AG04450 (cell line): ENCODE measurements at regions of chr17 and their contacts with region 1.

Region 1: DNA sequence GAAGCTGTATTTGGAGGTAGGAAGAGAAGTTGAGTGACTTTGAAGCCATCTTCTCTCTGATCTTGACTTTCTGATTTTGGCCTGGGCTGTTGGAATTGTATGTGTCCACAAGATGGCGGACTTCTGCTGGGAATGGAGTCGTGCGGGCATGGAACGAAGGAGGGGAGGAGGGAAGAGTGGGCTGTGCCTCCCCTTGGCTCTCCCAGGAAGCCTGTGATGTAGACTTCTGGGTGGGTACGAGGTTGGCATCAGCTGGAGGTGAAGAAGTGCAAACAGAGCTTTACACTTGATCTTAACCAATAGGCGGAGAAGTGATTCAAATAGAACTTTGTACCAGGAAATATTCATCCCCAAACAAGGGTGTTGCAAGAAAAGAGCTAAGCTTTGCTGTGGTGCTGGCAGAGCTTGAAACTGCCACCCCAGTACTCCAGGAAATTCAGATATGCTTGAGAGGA is 7.4 kb upstream of the TMEM220 start:
- DNase-seq: peak; percentile 24
- H3K4me3 ChIP-seq: no peak overlapping the region
- H3K27ac ChIP-seq: no peak overlapping the region
- H3K27me3 ChIP-seq: peaks cover 14% of the 10 kb centered on the region
- CTCF ChIP-seq: peak; percentile 82

Region 2: DNA sequence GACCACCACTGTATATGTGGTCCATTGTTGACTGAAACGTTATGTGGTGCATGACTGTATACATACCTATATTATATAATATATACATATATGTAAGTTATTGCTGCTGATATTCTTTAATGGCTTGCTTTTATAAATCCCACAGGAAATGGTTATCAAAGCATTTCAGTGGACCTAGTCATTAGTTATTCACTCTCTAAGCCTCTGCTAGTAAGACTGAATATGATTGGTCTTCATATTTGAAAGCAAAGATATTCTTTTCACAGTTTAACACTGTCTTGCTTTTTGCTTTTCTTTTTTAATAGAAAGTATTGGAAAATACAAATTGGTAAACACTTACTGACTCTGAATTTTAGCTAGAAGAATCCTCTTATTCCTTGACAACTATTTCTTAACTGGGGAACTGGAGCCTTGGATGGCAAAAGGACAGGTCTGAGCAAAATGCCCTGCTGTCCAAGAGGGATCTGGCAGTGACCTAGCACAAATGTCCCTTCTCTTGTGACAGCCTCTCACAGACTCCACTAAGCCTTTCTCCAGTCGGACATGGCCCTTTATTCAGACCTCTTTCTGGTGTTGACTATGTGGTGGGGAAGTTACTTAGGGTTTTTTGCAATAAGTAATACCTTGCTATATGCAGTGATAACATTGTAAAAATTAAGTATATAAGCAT is 173.1 kb before region 1 on chr17:
- CTCF ChIA-PET with region 1: no interaction called
- POLR2A ChIA-PET with region 1: no interaction called
- DNase-seq: no peak
- H3K4me3 ChIP-seq: no peak overlapping the region
- H3K27ac ChIP-seq: no peak overlapping the region
- H3K27me3 ChIP-seq: no peaks in the 10 kb centered on the region
- CTCF ChIP-seq: no peak

Region 3: DNA sequence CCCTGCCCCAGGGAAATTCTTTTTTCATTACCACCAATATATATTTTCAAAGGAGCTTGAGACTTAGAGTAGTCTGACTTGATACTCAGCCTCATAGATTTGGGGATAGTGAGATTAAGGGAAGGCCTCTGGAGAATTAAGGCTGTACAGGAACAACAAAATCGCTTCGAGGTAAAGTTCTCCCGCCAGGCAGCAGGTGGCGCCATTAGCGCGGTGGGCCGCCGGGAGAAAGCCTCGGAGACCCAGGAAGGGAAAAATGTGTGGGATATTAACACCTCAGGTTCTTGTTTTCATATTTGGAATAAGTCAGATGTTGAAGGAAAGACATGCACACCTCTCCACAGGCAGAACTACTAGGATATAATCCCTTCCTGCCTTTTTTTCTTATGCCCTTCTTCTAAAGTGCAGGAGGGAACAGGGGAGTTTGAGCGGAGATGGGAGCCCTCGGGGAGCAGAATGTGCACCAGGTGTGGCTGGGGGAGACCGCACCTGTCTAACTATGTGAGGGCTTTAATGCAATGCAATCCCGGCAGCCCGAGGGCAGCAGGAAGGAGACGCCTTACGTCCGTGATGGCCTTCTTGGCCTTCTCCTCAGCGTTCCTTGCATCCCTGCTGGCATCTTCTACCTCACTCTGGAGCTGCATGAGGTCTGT is 106.0 kb before region 1 on chr17:
- CTCF ChIA-PET with region 1: interaction called, 10 read pairs
- POLR2A ChIA-PET with region 1: no interaction called
- DNase-seq: no peak
- H3K4me3 ChIP-seq: no peak overlapping the region
- H3K27ac ChIP-seq: no peak overlapping the region
- H3K27me3 ChIP-seq: no peaks in the 10 kb centered on the region
- CTCF ChIP-seq: peak; percentile 88

Region 4: GRCh38 chr17:10646392-10646990 is 90.7 kb before region 1 on chr17:
- CTCF ChIA-PET with region 1: interaction called, 36 read pairs
- POLR2A ChIA-PET with region 1: no interaction called
- DNase-seq: peak; percentile 49
- H3K4me3 ChIP-seq: no peak overlapping the region
- H3K27ac ChIP-seq: no peak overlapping the region
- H3K27me3 ChIP-seq: no peaks in the 10 kb centered on the region
- CTCF ChIP-seq: peak; percentile 94

Region 5: GRCh38 chr17:10668771-10669170 is 68.4 kb before region 1 on chr17:
- CTCF ChIA-PET with region 1: interaction called, 10 read pairs
- POLR2A ChIA-PET with region 1: no interaction called
- DNase-seq: peak; percentile 58
- H3K4me3 ChIP-seq: no peak overlapping the region
- H3K27ac ChIP-seq: peak overlapping the region; percentile 47
- H3K27me3 ChIP-seq: no peaks in the 10 kb centered on the region
- CTCF ChIP-seq: no peak

Region 6: GRCh38 chr17:10697092-10698081 is 39.8 kb before region 1 on chr17 and contains the starts of genes ADPRM and SCO1:
- CTCF ChIA-PET with region 1: interaction called, 13 read pairs
- POLR2A ChIA-PET with region 1: no interaction called
- DNase-seq: peak; percentile 80
- H3K4me3 ChIP-seq: peak within 1 kb of the TSS; percentile 91
- H3K27ac ChIP-seq: peak within 1 kb of the TSS; percentile 91
- H3K27me3 ChIP-seq: no peaks in the 10 kb centered on the region
- CTCF ChIP-seq: peak; percentile 56
- polyA plus RNA-seq, gene ADPRM: 11.8 and 15.1 TPM in 2 replicates
- polyA plus RNA-seq, gene SCO1: 25.1 and 28.5 TPM in 2 replicates

Region 7: GRCh38 chr17:10713318-10713717 is 23.9 kb before region 1 on chr17:
- CTCF ChIA-PET with region 1: interaction called, 14 read pairs
- POLR2A ChIA-PET with region 1: no interaction called
- DNase-seq: no peak
- H3K4me3 ChIP-seq: no peak overlapping the region
- H3K27ac ChIP-seq: no peak overlapping the region
- H3K27me3 ChIP-seq: no peaks in the 10 kb centered on the region
- CTCF ChIP-seq: no peak

Region 8: GRCh38 chr17:10803830-10804475 is 66.8 kb after region 1 on chr17 and contains the start of gene TMEM238L:
- CTCF ChIA-PET with region 1: no interaction called
- POLR2A ChIA-PET with region 1: no interaction called
- DNase-seq: no peak
- H3K4me3 ChIP-seq: no peak within 1 kb of the TSS
- H3K27ac ChIP-seq: no peak within 1 kb of the TSS
- H3K27me3 ChIP-seq: no peaks in the 10 kb centered on the region
- CTCF ChIP-seq: no peak
- polyA plus RNA-seq, gene TMEM238L: not detected in 2 replicates

Region 9: DNA sequence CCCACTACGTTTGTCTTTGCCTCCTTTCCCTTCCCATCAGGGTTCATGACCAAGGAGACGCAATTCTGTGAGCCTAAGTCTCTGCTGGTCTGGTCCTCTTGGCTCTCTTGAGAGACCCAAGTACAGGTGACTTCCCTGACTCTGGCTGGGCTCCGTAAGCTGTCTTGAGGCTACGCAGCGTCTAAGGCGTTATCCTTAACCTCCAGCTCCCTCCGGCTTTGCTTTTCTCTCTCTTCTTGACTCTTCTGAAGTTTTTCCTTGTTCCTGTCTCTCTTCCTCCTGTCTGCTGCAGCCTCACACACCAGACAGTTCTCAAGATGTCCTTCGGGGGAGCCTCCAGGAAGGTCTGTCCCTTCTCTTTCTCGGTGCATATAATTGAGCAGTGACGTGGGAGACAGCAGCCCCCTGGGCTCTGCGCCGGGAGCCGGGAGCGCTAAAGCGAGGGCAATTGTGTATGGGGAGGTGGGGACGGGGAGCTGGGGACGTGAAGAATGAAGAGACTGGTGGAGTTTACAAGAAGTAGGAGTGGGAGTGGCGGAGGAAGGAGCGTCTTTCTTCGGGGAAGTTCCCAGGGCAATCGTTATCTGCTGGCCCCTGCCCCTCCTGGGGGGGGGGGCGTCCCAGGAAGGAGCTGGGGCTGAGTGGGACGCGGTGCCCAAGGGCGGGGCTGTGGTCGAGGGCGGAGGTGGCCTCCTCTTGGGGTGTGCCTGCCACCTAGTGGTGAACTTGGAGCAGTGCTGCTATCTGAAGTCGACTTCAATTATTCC is 107.6 kb after region 1 on chr17:
- CTCF ChIA-PET with region 1: interaction called, 75 read pairs
- POLR2A ChIA-PET with region 1: no interaction called
- DNase-seq: peak; percentile 24
- H3K4me3 ChIP-seq: peak overlapping the region; percentile 54
- H3K27ac ChIP-seq: no peak overlapping the region
- H3K27me3 ChIP-seq: no peaks in the 10 kb centered on the region
- CTCF ChIP-seq: peak; percentile 92

Region 10: DNA sequence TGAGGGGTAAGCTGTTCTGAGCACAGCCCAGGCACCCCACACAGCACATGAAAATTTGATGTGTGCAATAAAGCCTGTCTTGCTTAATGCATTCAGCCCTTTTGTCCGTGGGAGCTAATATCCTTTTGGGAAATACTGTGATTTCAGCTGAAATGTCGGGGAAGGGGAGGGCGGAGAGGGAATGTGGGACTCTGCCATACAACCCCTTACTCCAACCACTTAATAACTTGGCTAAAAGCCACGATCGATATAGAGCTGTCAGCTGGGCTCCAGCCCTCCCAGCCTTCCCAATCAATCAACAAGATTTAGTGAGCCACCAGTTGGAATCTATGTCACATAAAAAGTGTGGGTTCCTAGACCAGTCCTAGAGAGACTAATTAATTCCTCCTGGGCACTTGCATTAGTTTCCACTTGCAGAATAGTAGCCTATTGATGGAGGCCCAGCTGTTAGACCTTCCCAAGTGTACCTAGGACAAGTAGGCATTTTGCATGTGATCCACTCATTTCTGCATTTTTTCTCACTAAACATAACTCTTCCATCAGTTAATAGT is 183.4 kb after region 1 on chr17:
- CTCF ChIA-PET with region 1: no interaction called
- POLR2A ChIA-PET with region 1: no interaction called
- DNase-seq: no peak
- H3K4me3 ChIP-seq: no peak overlapping the region
- H3K27ac ChIP-seq: no peak overlapping the region
- H3K27me3 ChIP-seq: no peaks in the 10 kb centered on the region
- CTCF ChIP-seq: no peak